GM12878 (cell line): ENCODE measurements at regions of chr6 and their contacts with region 1.

Region 1: DNA sequence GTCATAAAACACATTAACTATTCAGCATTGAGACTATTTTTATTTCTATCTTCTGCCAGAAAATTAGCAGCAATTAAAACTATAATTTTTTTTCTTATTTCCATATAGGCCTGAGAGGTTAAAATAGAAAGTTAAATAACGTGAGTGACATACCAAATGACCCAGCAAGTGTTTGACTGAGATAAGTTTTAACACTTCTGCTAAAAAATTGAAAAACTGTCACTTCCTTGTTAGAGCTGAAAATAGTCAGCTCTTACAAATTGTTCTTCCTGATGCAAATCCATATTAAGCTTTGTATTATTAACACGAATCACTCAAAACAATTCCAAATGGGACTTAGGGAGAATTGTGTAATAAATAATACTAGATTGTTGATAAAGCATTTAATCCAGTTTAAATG is 26.5 kb upstream of the STX11 start:
- DNase-seq: no peak
- ATAC-seq: no peak
- H3K4me3 ChIP-seq: no peak overlapping the region
- H3K27ac ChIP-seq: no peak overlapping the region
- H3K4me1 ChIP-seq: no peaks in the 10 kb centered on the region
- H3K27me3 ChIP-seq: no peaks in the 10 kb centered on the region
- CTCF ChIP-seq: no peak
- EP300 ChIP-seq: no peak
- POLR2A ChIP-seq: no peak
- RAD21 ChIP-seq: no peak

Region 2: DNA sequence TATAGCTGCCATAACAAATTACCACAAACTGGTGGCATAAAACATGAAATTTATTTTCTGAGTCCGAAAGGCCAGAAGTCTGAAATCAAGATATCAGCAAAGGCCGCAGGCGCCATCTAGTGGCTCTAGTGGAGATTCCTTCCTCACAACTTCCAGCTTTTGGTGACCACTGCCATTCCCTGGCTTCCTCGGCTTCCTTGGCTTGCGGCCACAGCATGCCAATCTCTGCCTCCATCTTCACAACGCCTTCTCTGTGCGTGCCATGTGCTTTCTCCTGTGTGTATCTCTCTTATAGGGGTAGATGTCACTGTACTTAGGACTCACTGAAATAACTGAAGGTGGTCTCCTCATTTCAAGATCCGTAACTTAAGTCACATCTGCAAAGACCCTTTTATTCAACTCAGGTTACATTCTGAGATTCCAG is 110.3 kb before region 1 on chr6:
- CTCF ChIA-PET with region 1: no interaction called
- POLR2A ChIA-PET with region 1: no interaction called
- RAD21 ChIA-PET with region 1: no interaction called
- SMC1A ChIA-PET with region 1: no interaction called
- in situ Hi-C with region 1: no loop called
- intact Hi-C with region 1: no loop called
- DNase-seq: no peak
- ATAC-seq: peak; percentile 68
- H3K4me3 ChIP-seq: no peak overlapping the region
- H3K27ac ChIP-seq: no peak overlapping the region
- H3K4me1 ChIP-seq: no peaks in the 10 kb centered on the region
- H3K27me3 ChIP-seq: peaks cover 0 to 2% of the 10 kb centered on the region in 2 experiments; a peak in 2 of 4 replicates
- CTCF ChIP-seq: peak; percentile 78 to 88 (median 84)
- EP300 ChIP-seq: no peak
- POLR2A ChIP-seq: no peak
- RAD21 ChIP-seq: peak; percentile 94

Region 3: GRCh38 chr6:144027932-144028587 is 95.8 kb before region 1 on chr6:
- CTCF ChIA-PET with region 1: no interaction called
- POLR2A ChIA-PET with region 1: no interaction called
- RAD21 ChIA-PET with region 1: no interaction called
- SMC1A ChIA-PET with region 1: no interaction called
- in situ Hi-C with region 1: no loop called
- intact Hi-C with region 1: no loop called
- DNase-seq: no peak
- ATAC-seq: no peak
- H3K4me3 ChIP-seq: no peak overlapping the region
- H3K27ac ChIP-seq: no peak overlapping the region
- H3K4me1 ChIP-seq: no peaks in the 10 kb centered on the region
- H3K27me3 ChIP-seq: no peaks in the 10 kb centered on the region
- CTCF ChIP-seq: no peak
- EP300 ChIP-seq: no peak
- POLR2A ChIP-seq: no peak
- RAD21 ChIP-seq: no peak

Region 4: DNA sequence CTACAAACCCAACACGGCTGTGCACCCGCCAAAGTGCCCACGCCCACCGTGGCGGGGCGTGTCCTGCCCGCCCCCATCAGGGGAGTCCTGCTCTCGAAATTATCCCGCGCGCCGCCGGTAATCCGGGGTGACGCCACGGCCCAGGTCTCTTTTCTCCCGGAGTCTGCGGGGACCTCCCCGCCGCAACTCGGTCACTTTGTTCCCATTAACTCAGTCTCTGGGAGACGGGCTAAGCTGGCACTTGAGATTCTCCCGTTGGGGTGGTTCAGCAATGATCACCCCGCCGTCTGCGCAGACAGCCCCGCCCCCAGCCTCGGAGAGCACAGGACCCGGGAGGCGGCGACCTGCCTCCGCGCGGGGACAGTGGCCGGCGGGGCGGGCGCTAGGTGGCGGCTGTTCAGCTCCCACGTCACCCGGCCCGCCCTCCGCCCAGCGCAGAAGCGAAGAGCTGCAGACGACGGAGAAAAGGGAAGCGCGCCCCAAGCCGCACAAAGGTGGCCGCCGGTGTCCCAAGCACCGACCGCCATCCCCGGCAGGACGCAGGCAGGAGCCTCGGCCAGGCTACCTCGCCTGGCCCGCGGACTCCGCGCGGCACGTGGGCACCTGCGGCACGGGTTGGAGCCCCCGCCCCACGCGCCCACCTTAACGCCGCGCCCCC is 60.0 kb before region 1 on chr6:
- CTCF ChIA-PET with region 1: no interaction called
- POLR2A ChIA-PET with region 1: no interaction called
- RAD21 ChIA-PET with region 1: no interaction called
- SMC1A ChIA-PET with region 1: no interaction called
- in situ Hi-C with region 1: no loop called
- intact Hi-C with region 1: no loop called
- DNase-seq: peak; percentile 59
- ATAC-seq: peak; percentile 90
- H3K4me3 ChIP-seq: peak overlapping the region; percentile 85
- H3K27ac ChIP-seq: peak overlapping the region; percentile 94
- H3K4me1 ChIP-seq: peaks cover 10% of the 10 kb centered on the region
- H3K27me3 ChIP-seq: no peaks in the 10 kb centered on the region
- CTCF ChIP-seq: peak; percentile 13 to 41 (median 16); a peak in 3 of 6 replicates
- EP300 ChIP-seq: no peak
- POLR2A ChIP-seq: peak; percentile 97
- RAD21 ChIP-seq: no peak

Region 5: DNA sequence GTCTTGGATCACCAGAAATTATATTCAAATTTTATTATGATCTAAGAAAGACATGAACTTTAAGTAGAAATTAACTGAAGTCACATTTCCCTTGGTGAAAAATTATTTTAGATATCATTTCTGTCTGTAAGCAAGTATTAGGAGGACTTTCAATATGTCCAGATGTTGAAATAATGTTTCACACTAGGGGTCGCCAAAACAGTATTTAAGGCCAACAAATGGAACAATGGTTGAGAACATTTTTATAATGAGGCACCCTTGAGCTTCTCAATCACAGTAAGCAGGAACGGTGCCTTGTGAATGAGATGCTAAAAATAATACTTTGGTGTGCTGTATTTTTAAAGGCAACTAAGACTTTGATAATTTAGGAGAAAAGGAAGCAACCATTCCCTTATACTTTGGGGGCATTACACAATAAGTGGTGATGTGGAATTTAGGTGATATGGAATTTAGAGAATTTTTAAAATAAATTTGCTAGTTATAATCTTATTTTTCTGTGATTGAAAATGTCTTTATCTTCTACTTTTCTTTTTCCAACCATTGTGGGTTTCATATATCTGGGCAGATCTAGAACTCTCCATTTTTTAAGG is 18.8 kb before region 1 on chr6:
- CTCF ChIA-PET with region 1: interaction called, 9 read pairs
- POLR2A ChIA-PET with region 1: interaction called, 3 read pairs
- RAD21 ChIA-PET with region 1: interaction called, 9 read pairs
- SMC1A ChIA-PET with region 1: interaction called, 12 read pairs
- in situ Hi-C with region 1: no loop called
- intact Hi-C with region 1: no loop called
- DNase-seq: peak; percentile 53
- ATAC-seq: peak; percentile 97
- H3K4me3 ChIP-seq: no peak overlapping the region
- H3K27ac ChIP-seq: no peak overlapping the region
- H3K4me1 ChIP-seq: no peaks in the 10 kb centered on the region
- H3K27me3 ChIP-seq: no peaks in the 10 kb centered on the region
- CTCF ChIP-seq: peak; percentile 59 to 89 (median 72)
- EP300 ChIP-seq: no peak
- POLR2A ChIP-seq: no peak
- RAD21 ChIP-seq: peak; percentile 99

Region 6: DNA sequence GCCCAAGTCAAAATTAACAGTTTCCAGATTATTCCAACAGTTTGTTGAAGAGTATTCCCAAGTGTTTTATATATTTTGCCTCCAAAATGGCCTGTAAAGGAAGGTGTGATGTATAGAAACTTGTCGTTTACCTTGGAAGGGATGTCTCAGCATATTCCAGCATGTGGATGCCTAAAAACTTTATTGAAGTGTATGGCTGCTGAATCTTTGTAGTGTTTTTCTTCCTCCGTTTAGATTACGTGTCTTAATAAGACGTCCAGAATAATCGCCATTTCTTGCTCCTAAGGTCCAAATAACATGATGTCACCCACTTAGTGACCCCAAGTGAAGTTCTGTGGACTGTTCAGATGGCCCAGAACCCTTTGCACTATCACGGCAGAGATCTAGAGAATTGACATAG is 10.5 kb before region 1 on chr6:
- CTCF ChIA-PET with region 1: interaction called, 11 read pairs
- POLR2A ChIA-PET with region 1: interaction called, 3 read pairs
- RAD21 ChIA-PET with region 1: interaction called, 5 read pairs
- SMC1A ChIA-PET with region 1: interaction called, 14 read pairs
- in situ Hi-C with region 1: no loop called
- intact Hi-C with region 1: no loop called
- DNase-seq: no peak
- ATAC-seq: no peak
- H3K4me3 ChIP-seq: no peak overlapping the region
- H3K27ac ChIP-seq: no peak overlapping the region
- H3K4me1 ChIP-seq: no peaks in the 10 kb centered on the region
- H3K27me3 ChIP-seq: no peaks in the 10 kb centered on the region; a peak in 1 of 4 replicates
- CTCF ChIP-seq: no peak
- EP300 ChIP-seq: no peak
- POLR2A ChIP-seq: no peak
- RAD21 ChIP-seq: no peak

Region 7: DNA sequence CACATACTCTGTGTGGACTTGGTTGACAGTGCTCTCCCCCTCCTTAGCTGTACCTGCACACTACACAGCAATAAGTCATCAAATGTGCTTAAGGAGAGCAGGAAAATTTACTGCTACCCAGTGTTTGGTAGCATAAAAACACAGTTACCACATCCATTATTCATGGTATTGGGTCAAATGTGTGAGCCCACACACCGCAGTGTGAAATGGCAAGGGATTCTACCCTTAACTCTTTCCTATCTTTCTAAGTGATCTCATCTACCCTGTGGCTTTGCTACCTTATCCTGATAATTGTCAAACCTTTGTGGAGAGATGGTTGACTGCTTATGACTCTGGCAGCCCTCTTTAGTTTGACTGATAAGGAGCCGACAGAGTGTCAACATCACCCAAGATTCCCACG is 74.1 kb after region 1 on chr6:
- CTCF ChIA-PET with region 1: no interaction called
- POLR2A ChIA-PET with region 1: no interaction called
- RAD21 ChIA-PET with region 1: no interaction called
- SMC1A ChIA-PET with region 1: no interaction called
- in situ Hi-C with region 1: no loop called
- intact Hi-C with region 1: no loop called
- DNase-seq: no peak
- ATAC-seq: no peak
- H3K4me3 ChIP-seq: no peak overlapping the region
- H3K27ac ChIP-seq: no peak overlapping the region
- H3K4me1 ChIP-seq: no peaks in the 10 kb centered on the region
- H3K27me3 ChIP-seq: no peaks in the 10 kb centered on the region
- CTCF ChIP-seq: no peak
- EP300 ChIP-seq: no peak
- POLR2A ChIP-seq: no peak
- RAD21 ChIP-seq: no peak